Vagina (tissue), 2 donors: ENCODE measurements at regions of chrX and their contacts with region 1.

Region 1: GRCh38 chrX:81336455-81337152 is 134.7 kb downstream of the SH3BGRL start:
- DNase-seq: no peak
- H3K4me3 ChIP-seq: no peak overlapping the region
- H3K27ac ChIP-seq: no peak overlapping the region
- H3K4me1 ChIP-seq: no peaks in the 10 kb centered on the region
- H3K27me3 ChIP-seq: no peaks in the 10 kb centered on the region
- CTCF ChIP-seq: no peak
- POLR2A ChIP-seq: no peak

Region 2: DNA sequence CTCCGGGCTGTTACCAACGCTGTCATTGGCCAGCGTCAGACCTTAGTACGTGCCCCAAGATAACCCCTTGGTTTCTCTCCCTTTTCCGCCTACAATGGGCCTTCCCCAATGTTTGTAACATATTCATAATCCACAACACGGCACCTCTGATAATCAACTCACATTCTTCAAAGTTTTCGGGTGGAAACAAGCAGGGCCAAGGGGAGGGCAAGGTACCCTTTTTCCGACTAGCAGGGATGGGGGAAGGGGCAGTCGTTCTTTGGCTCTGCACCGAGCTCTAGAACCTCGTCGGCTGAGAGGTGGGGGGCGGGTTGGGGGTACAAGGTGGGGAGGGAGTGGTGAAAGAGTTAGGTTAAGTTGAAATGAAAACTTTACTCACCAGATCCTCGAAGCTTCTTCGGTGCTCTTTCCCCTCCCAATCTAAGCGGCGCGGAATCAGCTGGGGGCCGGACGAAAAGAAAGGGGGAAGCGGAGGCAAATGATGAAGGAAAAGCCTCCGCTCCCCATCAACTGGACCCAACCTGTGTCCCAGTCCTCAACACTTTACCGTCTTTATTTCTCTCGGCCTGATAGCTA is 528.4 kb before region 1 on chrX:
- intact Hi-C with region 1: loop called (anchors 5 kb)
- DNase-seq: no peak
- H3K4me3 ChIP-seq: peak overlapping the region; percentile 63 to 69
- H3K27ac ChIP-seq: peak overlapping the region; percentile 81
- H3K4me1 ChIP-seq: no peaks in the 10 kb centered on the region
- H3K27me3 ChIP-seq: no peaks in the 10 kb centered on the region
- CTCF ChIP-seq: no peak
- POLR2A ChIP-seq: no peak

Region 3: DNA sequence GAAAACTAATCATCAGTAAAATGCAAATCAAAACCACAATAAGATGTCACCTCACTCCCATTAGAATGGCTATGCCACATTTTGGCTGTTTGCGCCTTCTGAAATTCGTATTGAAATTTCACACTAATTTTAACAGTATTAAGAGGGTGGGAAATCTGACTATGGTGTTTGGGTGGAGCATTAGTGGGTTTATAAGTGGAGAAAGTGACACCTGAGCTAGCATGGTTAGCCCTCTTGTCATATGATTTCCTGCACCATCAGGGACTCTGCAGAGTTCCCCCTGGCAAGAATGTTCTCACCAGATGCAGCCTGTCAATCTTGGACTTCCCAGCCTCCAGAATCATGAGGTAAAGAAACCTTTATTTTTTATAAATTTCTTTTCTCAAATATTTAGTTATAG is 495.3 kb before region 1 on chrX:
- intact Hi-C with region 1: no loop called
- DNase-seq: no peak
- H3K4me3 ChIP-seq: no peak overlapping the region
- H3K27ac ChIP-seq: no peak overlapping the region
- H3K4me1 ChIP-seq: no peaks in the 10 kb centered on the region
- H3K27me3 ChIP-seq: no peaks in the 10 kb centered on the region
- CTCF ChIP-seq: no peak
- POLR2A ChIP-seq: no peak